Testis (tissue), 5 donors: ENCODE measurements at regions of chr12 and their contacts with region 1.

Region 1: DNA sequence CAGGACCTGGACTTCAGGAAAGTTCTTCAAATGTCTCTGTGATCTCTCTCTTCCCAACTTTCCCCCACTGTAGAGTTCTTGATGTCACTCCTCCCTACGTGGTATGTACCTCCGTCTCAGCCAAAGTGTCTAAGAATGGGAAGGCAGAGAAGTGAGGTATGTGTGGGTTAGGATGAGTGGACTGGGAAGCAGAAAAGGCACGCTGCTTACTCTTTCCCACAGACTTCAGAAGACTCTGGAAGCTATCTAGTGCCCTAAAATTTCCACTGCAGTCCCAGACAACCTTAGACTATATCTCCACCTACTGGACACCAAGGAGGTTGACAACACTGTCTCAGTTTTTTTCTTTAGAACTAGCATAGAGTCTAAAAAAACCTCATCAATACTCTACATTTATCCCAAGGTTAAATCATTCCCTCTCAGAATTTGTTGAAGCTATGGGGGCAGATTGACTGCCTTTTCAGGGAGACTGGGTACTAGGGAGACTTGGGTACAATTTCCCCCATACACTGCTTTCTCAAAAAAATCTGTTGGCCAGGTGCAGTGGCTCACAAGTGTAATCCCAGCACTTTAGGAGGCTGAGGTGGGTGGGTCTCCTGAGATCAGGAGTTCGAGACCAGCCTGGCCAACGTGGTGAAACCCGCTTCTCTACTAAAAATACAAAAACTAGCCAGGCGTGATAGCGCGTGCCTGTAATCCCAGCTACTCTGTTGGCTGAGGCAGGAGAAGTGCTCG is 20.6 kb upstream of the ITGA5 start:
- DNase-seq: no peak
- H3K4me3 ChIP-seq: no peak overlapping the region
- H3K27ac ChIP-seq: no peak overlapping the region
- H3K4me1 ChIP-seq: no peaks in the 10 kb centered on the region
- H3K27me3 ChIP-seq: no peaks in the 10 kb centered on the region
- CTCF ChIP-seq: peak; percentile 58 to 73 (median 62)
- POLR2A ChIP-seq: no peak

Region 2: DNA sequence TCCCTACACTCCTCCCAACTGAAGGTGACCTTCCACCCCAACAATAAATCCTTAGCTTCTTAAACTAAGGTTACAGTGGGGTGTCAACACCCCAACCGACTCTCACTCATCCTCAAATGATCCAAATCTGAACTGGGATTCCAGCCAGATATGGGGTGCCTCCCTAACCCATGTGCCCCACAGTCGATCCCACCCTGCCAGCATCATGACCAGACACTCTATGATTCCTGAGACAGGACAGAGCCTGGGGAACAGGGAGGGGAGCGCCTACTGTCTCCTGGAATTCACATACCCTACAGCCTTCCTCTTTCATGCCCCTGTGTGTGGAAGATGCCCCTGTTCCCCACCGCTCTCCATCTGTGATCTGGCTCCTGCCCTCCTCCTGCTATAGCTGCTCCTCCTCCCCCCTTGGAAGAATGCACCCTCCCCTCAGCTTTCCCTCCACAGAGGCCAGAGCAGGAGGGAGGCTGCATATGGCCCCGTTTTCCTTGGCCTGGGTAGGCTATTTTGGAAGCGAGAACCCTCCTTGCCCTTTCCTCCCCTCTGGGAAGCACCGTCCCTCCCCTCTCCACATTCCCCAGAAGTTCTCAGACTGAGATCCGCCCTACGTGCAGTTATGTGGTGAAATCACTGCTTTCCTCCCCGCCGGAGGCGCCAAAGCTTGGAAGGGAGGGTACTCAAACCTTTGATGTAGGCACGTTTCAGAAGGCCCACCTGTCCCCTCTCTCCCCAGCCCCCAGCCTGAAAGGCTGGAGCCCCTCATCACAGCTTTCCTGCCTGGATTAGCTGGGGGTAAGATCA is 298.9 kb before region 1 on chr12:
- intact Hi-C with region 1: no loop called
- DNase-seq: peak; percentile 55
- H3K4me3 ChIP-seq: no peak overlapping the region
- H3K27ac ChIP-seq: peak overlapping the region; percentile 63 to 64
- H3K4me1 ChIP-seq: peaks cover 13% of the 10 kb centered on the region
- H3K27me3 ChIP-seq: no peaks in the 10 kb centered on the region
- CTCF ChIP-seq: no peak
- POLR2A ChIP-seq: no peak

Region 3: DNA sequence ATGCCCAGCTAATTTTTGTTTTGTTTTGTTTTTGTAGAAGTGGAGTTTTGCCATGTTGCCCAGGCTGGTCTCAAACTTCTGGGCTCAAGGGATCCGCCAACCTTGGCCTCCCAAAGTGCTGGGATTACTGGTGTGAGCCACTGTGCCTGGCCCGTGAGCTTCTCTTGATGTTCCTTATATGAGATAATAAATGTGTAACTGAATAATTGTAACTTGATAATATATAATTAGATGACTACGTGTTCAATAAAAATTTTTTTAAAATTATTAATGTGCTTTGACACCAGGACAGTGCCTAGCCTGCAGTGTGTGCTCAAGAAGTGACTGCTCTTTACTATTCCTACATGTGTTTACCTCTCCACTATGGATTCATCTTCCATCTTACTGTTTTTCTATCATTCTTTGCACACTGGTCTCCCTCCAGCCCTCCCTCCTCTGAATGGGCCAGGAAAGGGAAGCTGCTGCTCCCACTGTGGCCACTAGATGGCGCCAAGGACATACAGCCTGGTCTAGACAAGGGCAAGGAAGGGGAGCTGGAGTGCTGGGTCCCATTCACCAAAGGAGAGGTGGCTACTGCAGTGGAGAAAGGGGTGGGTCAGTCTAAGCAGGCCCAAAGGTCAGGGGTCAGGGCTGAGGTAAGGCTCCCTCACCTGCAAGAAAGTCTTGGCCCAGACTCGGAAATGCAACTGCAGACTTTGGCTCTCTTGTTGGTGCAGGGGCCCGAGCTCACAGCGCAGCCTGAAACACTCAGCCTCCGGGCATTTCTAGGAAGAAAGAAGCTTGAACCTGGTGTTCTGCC is 40.5 kb before region 1 on chr12:
- intact Hi-C with region 1: loop called (anchors 5 kb)
- DNase-seq: peak; percentile 92
- H3K4me3 ChIP-seq: no peak overlapping the region
- H3K27ac ChIP-seq: no peak overlapping the region
- H3K4me1 ChIP-seq: no peaks in the 10 kb centered on the region
- H3K27me3 ChIP-seq: no peaks in the 10 kb centered on the region
- CTCF ChIP-seq: peak; percentile 86 to 97 (median 87)
- POLR2A ChIP-seq: no peak